Endothelial cell of umbilical vein (primary cell): ENCODE measurements at regions of chr7 and their contacts with region 1.

Region 1: GRCh38 chr7:76262683-76263402 is 39.6 kb upstream of the HSPB1 start:
- DNase-seq: peak; percentile 48
- H3K4me3 ChIP-seq: no peak overlapping the region
- H3K27ac ChIP-seq: no peak overlapping the region
- H3K4me1 ChIP-seq: peaks cover 4% of the 10 kb centered on the region
- H3K27me3 ChIP-seq: peaks cover 12 to 14% of the 10 kb centered on the region in 2 experiments
- CTCF ChIP-seq: peak; percentile 70 to 80
- POLR2A ChIP-seq: no peak

Region 2: DNA sequence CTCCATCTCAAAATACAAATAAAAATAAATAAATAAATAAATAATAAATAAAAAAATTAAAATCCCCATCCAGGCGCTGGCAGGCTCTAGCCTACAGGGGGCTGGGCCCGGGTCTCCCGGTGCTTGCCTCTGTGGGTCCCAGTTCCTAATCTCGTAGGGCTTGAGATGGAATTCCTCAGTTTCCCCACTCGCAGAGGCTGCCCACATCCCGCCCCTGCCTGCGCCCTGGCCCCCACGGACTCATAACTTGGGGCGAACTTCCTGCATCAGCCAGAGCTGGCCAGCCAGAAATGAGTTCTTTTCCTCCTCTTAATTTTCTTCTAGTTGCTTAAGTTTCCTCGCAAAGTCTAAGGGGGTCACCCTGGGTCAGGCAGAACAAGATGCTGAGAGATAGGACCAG is 83.2 kb before region 1 on chr7:
- CTCF ChIA-PET with region 1: interaction called, 89 read pairs
- POLR2A ChIA-PET with region 1: no interaction called
- dilution Hi-C with region 1: no loop called
- intact Hi-C with region 1: loop called (anchors 1 kb)
- DNase-seq: no peak
- H3K4me3 ChIP-seq: no peak overlapping the region
- H3K27ac ChIP-seq: no peak overlapping the region
- H3K4me1 ChIP-seq: no peaks in the 10 kb centered on the region
- H3K27me3 ChIP-seq: no peaks in the 10 kb centered on the region
- CTCF ChIP-seq: no peak
- POLR2A ChIP-seq: no peak

Region 3: DNA sequence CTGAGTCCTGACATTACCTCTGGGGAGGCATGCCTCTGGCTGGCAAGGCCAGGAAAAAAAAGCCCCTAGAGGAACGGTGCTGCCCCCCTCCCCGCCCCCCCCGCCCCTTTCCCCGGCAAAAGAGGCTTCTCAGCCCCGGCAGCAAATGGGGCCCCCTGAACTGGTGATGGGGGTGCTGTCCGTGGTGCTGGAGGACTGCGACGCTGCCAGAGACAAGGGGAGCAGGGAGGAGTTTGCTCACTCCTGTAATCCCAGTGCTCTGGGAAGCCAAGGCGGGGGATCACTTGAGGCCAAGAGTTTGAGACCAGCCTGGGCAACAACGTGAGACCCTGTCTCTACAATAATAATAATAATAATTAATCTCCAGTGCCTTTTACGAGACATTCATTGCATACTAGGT is 37.5 kb before region 1 on chr7:
- CTCF ChIA-PET with region 1: interaction called, 5 read pairs
- POLR2A ChIA-PET with region 1: no interaction called
- dilution Hi-C with region 1: no loop called
- intact Hi-C with region 1: loop called (anchors 5 kb)
- DNase-seq: peak; percentile 15
- H3K4me3 ChIP-seq: no peak overlapping the region
- H3K27ac ChIP-seq: no peak overlapping the region
- H3K4me1 ChIP-seq: no peaks in the 10 kb centered on the region
- H3K27me3 ChIP-seq: peaks cover 0 to 4% of the 10 kb centered on the region in 2 experiments
- CTCF ChIP-seq: no peak
- POLR2A ChIP-seq: no peak

Region 4: DNA sequence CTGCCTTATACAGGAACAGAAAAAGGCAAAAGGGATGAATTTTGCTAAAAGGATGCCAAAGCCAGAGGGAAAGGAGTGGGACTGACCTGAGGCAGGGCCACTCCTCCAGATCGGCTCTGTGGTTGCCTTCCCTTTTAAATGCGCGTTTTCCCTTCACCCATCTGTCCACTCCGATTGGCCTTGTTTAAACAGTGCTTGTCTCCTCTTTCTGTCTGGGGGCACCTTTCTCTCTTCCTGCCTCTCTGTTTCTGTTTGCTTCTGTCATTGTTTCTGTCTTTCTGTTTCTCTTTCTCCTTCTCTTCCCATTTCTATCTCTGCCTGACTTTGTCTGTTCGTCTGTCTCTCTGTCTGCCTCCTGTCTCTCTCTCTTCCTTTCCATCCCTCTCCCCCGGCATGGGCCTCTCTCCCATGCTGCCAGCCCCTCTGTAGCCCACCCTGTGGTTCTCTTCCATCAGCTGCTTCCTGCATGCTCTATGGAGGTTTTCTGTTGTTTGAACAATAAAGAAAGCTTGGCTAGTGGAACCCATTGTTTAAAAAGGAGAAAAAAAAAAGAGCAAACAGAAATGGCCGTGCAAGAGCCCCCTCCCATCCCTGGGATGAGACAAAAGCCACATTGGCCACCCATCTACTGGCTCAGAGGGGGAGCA is 10.1 kb after region 1 on chr7:
- CTCF ChIA-PET with region 1: interaction called, 55 read pairs
- POLR2A ChIA-PET with region 1: no interaction called
- dilution Hi-C with region 1: no loop called
- intact Hi-C with region 1: no loop called
- DNase-seq: no peak
- H3K4me3 ChIP-seq: no peak overlapping the region
- H3K27ac ChIP-seq: no peak overlapping the region
- H3K4me1 ChIP-seq: no peaks in the 10 kb centered on the region
- H3K27me3 ChIP-seq: peaks cover 28 to 41% of the 10 kb centered on the region in 2 experiments
- CTCF ChIP-seq: no peak
- POLR2A ChIP-seq: no peak

Region 5: DNA sequence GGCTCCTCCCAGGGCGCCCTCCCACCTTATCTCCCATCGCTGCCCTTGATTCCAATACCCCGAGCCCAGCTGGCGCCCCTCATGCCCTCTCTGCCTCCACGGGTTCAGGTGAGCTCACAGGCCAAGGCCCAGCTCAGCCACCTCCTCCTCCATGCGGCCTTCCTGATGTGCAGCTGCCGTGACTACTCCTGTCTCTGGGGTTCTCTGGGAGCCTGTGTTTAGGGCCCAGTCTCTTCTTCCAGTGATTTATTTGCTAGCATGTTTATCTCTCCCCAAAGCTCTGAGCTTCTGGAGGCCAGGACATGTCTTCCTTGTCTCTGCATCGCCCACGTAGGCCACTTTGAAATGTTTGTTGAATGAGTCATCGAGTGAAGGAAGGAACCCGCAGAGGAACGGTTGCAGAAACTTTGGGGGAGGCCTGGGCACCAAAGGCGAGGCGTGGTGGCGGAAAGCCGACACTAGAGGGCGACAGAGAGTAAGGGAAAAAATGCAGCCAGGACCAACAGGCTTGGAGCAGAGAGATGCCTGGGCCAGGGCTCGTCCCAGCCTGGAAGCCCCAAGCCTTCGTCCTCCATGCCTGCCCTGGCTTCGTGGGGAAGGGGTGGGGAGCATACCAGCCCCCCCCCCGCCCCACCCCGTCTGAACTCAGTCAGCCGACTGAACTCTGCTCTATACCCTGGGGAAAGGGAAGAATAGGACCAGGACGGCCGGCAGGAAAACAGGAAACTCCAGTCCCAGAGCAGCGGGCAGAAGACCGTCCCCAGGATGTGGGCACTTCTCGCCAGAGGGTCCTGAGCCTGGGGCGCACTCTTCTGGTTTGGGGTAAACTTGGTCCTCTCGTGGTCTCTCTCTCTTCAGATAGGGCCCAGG is 28.7 kb after region 1 on chr7:
- CTCF ChIA-PET with region 1: interaction called, 25 read pairs
- POLR2A ChIA-PET with region 1: no interaction called
- dilution Hi-C with region 1: no loop called
- intact Hi-C with region 1: loop called (anchors 1 kb)
- DNase-seq: peak; percentile 99
- H3K4me3 ChIP-seq: no peak overlapping the region
- H3K27ac ChIP-seq: peak overlapping the region; percentile 94
- H3K4me1 ChIP-seq: peaks cover 27% of the 10 kb centered on the region
- H3K27me3 ChIP-seq: no peaks in the 10 kb centered on the region
- CTCF ChIP-seq: peak; percentile 95 to 97
- POLR2A ChIP-seq: no peak